Natural killer cell (primary cell): ENCODE measurements at regions of chr6 and their contacts with region 1.

Region 1: GRCh38 chr6:36075656-36076055 is 48.0 kb downstream of the MAPK14 start:
- DNase-seq: peak in 1 of 2 donors; percentile 56
- ATAC-seq: peak in 2 of 3 donors; percentile 55 to 56
- H3K4me3 ChIP-seq: no peak overlapping the region
- H3K4me3 Mint-ChIP-seq: no peak overlapping the region
- H3K27ac ChIP-seq: no peak overlapping the region
- H3K27ac Mint-ChIP-seq: peak overlapping the region; percentile 9 to 75
- H3K4me1 ChIP-seq: no peaks in the 10 kb centered on the region
- H3K4me1 Mint-ChIP-seq: peaks cover 35 to 40% of the 10 kb centered on the region in 2 donors
- H3K27me3 ChIP-seq: no peaks in the 10 kb centered on the region
- H3K27me3 Mint-ChIP-seq: no peaks in the 10 kb centered on the region
- CTCF ChIP-seq: peak; percentile 29

Region 2: DNA sequence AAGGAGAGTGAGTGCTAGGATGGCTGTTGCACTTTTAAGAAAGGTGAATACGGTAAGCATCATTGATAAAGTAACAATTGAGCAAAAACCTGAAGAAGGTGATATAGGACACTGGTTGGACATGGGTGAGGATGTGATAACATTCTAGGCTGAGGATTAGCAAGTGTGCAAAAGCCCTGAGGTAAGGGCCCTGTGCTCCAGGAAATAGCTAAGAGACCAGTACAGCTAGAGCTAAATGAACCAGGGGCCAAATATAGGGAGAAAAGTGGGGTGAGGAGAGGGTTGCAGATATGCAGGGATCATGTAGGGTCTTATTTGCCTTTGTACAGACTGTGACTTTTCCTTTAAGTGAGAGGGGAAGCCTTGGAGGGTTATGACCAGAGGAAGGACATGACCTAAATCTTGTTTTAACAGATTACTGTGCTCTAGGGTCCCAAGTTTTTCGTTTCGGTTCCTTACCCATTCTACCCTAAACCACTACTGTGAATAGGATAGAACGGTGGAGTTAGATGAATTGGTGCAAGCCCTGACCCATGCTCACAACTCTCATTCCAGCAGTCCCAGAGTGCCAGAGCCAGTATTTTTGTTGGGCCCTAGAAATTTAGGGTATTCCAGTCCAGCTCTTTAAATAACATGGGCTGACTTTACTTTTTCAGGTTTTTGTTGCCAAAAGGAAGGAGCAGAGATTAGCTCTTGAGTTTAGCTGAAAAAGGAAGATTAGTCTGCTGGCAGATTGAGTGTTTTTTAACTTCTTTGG is 37.4 kb before region 1 on chr6:
- intact Hi-C with region 1: loop called (anchors 5 kb)
- DNase-seq: no peak
- ATAC-seq: peak; percentile 38 to 64 (median 63)
- H3K4me3 ChIP-seq: no peak overlapping the region
- H3K4me3 Mint-ChIP-seq: peak overlapping the region; percentile 45
- H3K27ac ChIP-seq: peak overlapping the region; percentile 24
- H3K27ac Mint-ChIP-seq: peak overlapping the region; percentile 80 to 83
- H3K4me1 ChIP-seq: peaks cover 25% of the 10 kb centered on the region
- H3K4me1 Mint-ChIP-seq: peaks cover 79% of the 10 kb centered on the region in 2 donors
- H3K27me3 ChIP-seq: no peaks in the 10 kb centered on the region
- H3K27me3 Mint-ChIP-seq: no peaks in the 10 kb centered on the region
- CTCF ChIP-seq: no peak

Region 3: GRCh38 chr6:36123257-36124139 is 47.8 kb after region 1 on chr6:
- intact Hi-C with region 1: no loop called
- DNase-seq: peak; percentile 87 to 96
- ATAC-seq: peak; percentile 72 to 88 (median 87)
- H3K4me3 ChIP-seq: no peak overlapping the region
- H3K4me3 Mint-ChIP-seq: peak overlapping the region; percentile 64
- H3K27ac ChIP-seq: peak overlapping the region; percentile 69
- H3K27ac Mint-ChIP-seq: peak overlapping the region; percentile 100
- H3K4me1 ChIP-seq: peaks cover 88% of the 10 kb centered on the region
- H3K4me1 Mint-ChIP-seq: peaks cover 68 to 96% of the 10 kb centered on the region in 2 donors
- H3K27me3 ChIP-seq: no peaks in the 10 kb centered on the region
- H3K27me3 Mint-ChIP-seq: no peaks in the 10 kb centered on the region
- CTCF ChIP-seq: peak; percentile 64